Posterior vena cava (tissue), 2 donors: ENCODE measurements at regions of chr7 and their contacts with region 1.

Region 1: GRCh38 chr7:471866-472639 is 47.6 kb downstream of the PDGFA start:
- DNase-seq: peak; percentile 95

Region 2: GRCh38 chr7:1883031-1883761 is 1411.1 kb after region 1 on chr7:
- intact Hi-C with region 1: loop called in 1 of 2 experiments (anchors 10 kb)
- DNase-seq: no peak